ENCODE measurements at regions of chr18 and their contacts with region 1.

Region 1: DNA sequence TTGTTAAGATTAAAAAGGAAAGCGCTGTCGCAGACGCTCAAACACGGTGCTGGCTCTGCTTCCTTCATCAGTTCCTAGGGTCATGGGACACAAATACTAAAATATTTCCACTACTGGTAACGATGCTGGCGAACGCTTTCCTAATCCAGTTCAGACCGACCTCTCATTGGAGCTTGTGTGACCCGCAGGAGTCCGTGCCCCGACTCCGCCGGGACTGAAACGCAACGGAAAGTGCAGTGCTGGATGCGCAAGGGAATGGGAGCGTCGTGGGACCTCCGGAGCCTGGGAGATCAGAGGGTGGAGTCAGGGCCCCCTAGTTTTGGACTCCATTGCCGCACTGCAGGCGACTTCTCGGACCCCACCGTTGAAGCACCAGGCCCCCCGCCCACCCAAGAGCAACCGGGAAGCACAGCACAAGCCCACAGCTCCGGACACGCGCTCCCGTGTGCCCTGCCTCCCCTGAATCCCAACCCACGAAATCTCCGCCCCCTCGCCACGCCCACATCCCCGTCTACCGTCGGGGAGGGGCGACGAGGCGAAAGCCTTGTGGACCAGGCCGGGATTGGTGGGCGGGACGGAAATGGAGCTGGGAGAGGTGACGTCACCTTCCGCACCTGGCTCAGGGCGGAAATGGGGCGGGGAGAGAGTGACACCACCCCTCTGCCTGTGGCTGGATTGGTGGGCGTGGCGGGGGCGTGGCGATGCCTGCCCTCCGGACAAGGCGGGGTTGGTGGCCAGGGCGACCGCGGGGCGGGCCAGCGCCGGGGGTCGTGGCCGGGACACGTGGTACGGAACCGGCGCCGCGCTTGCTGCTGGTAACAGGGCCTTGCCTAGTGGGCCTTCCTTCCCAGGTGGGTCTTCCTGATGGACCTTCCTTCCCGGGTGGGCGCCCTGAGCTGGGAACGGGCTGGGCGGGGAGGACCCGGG is at the start of gene CNDP2:
- DNase-seq: peak; percentile 96
- ATAC-seq: peak; percentile 87
- H3K4me3 ChIP-seq: peak within 1 kb of the TSS; percentile 89 to 90 (median 89)
- H3K27ac ChIP-seq: peak within 1 kb of the TSS; percentile 87
- H3K4me1 ChIP-seq: peaks cover 41% of the 10 kb centered on the region
- H3K27me3 ChIP-seq: no peaks in the 10 kb centered on the region; a peak in 1 of 5 replicates
- CTCF ChIP-seq: 0 out of 2 replicates have a peak, but pooled peaks have one; percentile 1
- EP300 ChIP-seq: no peak; a peak in 1 of 4 replicates
- POLR2A ChIP-seq: peak; percentile 68 to 93
- RAD21 ChIP-seq: peak; percentile 50
- total RNA-seq, gene CNDP2: 80.8 and 113 TPM in 2 replicates

Region 2: DNA sequence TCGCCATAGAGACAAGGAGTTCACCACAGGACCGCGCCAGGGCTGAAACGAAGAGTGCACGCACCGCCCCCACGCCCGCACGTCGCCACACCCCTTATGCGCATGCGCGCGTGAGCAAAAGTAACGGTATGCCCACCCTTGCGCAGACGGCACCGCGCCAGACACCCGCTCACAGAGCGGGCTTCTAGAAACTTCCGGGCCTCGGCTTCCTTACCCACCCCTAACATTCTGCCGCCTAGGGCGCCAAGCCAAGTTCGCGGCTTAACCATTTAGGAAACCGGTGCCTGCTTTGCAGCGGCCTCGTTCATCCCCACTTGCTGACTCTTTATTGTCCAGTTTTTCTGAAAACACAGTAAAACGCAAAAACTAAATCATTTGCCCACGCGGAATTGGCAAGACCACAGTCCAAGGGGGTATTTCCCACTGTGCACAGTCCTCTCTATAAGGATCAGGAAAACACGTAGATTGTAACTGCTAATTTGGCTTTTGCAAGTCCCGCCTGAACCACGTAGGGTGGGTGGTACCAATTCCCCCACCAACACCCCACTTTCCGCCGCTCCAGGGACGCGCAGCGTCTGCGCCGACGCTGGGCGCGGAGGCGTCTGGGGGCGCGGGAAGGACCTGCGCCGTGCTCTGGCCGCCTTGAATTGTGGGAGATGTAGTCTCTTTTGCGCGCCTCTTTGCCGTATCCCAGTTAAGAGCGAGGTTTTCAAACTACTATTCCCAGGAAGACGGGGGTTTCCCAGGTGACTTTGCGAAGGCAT is 347.9 kb before region 1 on chr18 and contains the starts of genes FBXO15 and TIMM21:
- CTCF ChIA-PET with region 1: no interaction called
- POLR2A ChIA-PET with region 1: no interaction called
- in situ Hi-C with region 1: no loop called
- intact Hi-C with region 1: loop called (anchors 5 kb)
- DNase-seq: peak; percentile 95
- ATAC-seq: peak; percentile 97
- H3K4me3 ChIP-seq: peak within 1 kb of the TSS; percentile 80 to 96 (median 80)
- H3K27ac ChIP-seq: peak within 1 kb of the TSS; percentile 81
- H3K4me1 ChIP-seq: peaks cover 31% of the 10 kb centered on the region
- H3K27me3 ChIP-seq: peaks cover 0 to 5% of the 10 kb centered on the region in 2 experiments; a peak in 2 of 5 replicates
- CTCF ChIP-seq: no peak
- EP300 ChIP-seq: peak in 1 of 2 experiments; percentile 11; a peak in 1 of 4 replicates
- POLR2A ChIP-seq: peak; percentile 64 to 72; a peak in 3 of 4 replicates
- RAD21 ChIP-seq: no peak
- total RNA-seq, gene FBXO15: 0.09 TPM in 1 of 2 replicates, not detected in the other
- total RNA-seq, gene TIMM21: 55.6 and 62.3 TPM in 2 replicates

Region 3: DNA sequence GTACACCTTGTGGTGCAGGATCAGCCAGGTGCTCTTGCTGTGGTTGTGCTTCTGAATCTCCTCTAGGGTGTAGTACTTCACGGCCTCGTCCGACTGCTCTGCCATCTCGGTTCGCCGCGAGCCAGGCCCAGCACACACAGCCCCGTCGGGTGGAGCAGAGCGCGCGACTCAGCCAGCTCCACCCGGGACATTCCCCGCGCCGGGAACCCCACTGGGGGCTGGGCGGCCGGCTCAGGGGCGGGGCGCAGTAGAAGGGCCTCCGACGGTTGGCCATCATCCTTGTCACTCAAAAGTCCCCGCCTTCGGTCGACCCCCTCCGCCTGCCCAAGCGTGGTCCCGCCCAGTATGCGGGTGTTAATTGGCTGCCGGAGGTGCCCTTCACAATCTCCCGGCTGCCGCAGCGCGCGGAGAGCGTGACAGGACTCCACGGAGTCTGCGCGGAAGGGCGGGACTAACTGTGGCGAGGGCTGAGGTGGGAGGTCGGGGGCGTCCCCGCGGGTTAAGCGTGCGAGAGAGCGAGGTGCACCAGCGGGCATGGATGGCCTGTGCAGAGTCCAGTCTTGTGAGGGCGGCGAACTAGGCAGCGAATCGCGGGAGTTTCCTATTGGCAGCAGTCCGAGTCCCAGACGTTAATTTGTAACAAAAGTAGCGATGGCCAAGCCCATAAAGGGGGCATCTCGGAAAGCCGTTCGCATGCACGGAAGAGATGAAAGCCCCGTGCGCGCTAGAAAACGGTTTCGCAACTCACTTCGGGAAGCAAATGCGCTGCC is 203.9 kb before region 1 on chr18 and contains the start of gene CYB5A:
- CTCF ChIA-PET with region 1: no interaction called
- POLR2A ChIA-PET with region 1: interaction called, 3 read pairs
- in situ Hi-C with region 1: no loop called
- intact Hi-C with region 1: loop called (anchors 1 kb)
- DNase-seq: peak; percentile 98
- ATAC-seq: peak; percentile 93
- H3K4me3 ChIP-seq: peak within 1 kb of the TSS; percentile 82 to 94 (median 91)
- H3K27ac ChIP-seq: peak within 1 kb of the TSS; percentile 94
- H3K4me1 ChIP-seq: peaks cover 50% of the 10 kb centered on the region
- H3K27me3 ChIP-seq: no peaks in the 10 kb centered on the region; a peak in 1 of 5 replicates
- CTCF ChIP-seq: peak; percentile 13; the same call in 1 of the 2 replicates
- EP300 ChIP-seq: peak; percentile 26 to 74; a peak in 2 of 4 replicates
- POLR2A ChIP-seq: peak; percentile 60 to 72
- RAD21 ChIP-seq: 0 out of 2 replicates have a peak, but pooled peaks have one; percentile 32
- total RNA-seq, gene CYB5A: 356 and 411 TPM in 2 replicates

Region 4: GRCh38 chr18:74476140-74476539 is 19.7 kb before region 1 on chr18:
- CTCF ChIA-PET with region 1: no interaction called
- POLR2A ChIA-PET with region 1: interaction called, 7 read pairs
- in situ Hi-C with region 1: no loop called
- intact Hi-C with region 1: loop called (anchors 1 kb)
- DNase-seq: peak; percentile 25
- ATAC-seq: peak; percentile 52
- H3K4me3 ChIP-seq: no peak overlapping the region
- H3K27ac ChIP-seq: no peak overlapping the region
- H3K4me1 ChIP-seq: peaks cover 50% of the 10 kb centered on the region
- H3K27me3 ChIP-seq: no peaks in the 10 kb centered on the region
- CTCF ChIP-seq: peak; percentile 70
- EP300 ChIP-seq: no peak
- POLR2A ChIP-seq: no peak
- RAD21 ChIP-seq: peak; percentile 38; the same call in 1 of the 2 replicates

Region 5: DNA sequence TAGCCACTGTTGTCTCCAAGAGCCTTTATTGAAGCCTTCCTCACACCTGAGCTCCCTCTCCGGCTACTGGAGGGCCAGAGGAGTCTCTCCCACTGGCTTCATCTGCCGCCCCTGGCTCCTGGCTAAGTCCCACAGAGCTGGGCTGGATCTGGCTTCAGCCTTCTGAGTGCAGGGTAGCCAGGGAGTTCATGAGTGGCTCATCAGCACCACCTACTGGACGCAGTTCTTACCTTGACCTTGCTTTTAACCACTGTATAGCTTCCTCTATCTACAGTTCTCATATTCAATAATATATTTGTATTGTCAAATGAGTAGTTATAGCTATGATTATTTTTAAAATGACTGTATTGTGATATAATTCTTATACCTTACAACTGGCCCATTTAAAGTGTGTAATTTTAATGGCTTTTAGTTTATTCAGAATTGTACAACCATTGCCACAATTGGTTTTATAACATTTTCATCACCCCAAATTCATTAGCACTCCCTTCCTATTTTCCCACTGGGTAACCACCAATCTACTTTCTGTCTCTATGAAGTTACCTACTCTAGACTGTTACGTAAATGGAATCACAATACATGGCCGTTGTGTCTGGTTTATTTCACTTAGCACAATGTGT is 56.2 kb after region 1 on chr18:
- CTCF ChIA-PET with region 1: interaction called, 3 read pairs
- POLR2A ChIA-PET with region 1: interaction called, 13 read pairs
- in situ Hi-C with region 1: no loop called
- intact Hi-C with region 1: loop called (anchors 1 kb)
- DNase-seq: peak; percentile 74
- ATAC-seq: peak; percentile 99
- H3K4me3 ChIP-seq: no peak overlapping the region
- H3K27ac ChIP-seq: no peak overlapping the region
- H3K4me1 ChIP-seq: peaks cover 16% of the 10 kb centered on the region
- H3K27me3 ChIP-seq: peaks cover 0 to 11% of the 10 kb centered on the region in 2 experiments; a peak in 3 of 5 replicates
- CTCF ChIP-seq: peak; percentile 91
- EP300 ChIP-seq: no peak
- POLR2A ChIP-seq: no peak
- RAD21 ChIP-seq: peak; percentile 68

Measured in HepG2 (cell line).